ENCODE measurements at regions of chr12 and their contacts with region 1.

Region 1: DNA sequence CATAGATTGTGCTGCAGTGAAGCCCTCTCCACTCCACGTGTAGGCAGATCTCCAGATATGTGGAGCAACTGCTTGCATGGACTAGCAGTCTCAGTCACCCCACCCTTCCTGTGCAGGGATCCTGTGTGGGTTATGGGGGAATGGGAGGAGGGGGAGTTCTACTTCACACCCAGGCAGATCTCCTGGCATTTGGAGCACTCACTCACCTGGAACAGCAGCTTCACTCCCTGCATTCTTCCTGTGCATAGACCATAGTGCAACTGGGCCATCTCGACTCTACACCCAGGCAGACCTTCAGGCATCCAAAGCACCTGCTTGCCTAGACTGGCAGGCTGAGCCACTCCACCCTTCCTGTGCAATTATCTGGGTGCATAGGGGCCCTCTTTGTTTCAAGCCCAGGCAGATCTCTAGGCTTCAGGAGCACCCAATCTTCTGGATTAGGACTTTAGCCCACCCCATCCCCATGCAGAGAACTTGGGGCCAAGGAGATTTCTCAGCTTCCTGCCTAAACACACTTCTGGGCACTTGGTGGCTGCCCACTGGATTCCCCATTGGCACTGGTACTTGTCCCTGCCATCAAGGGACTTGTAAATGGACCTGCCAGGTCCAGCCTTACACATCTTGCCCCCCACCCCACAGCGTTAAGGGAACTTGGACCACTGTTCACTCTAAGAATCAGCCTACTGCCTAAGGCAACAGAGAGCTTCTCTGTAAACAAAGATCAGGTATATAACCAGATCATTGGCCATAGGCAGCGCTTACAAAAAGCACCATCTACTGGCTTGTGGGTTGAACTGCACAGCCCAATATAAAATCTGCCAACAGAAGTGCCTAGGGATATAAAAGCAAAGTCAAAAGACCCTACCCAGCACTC is 95.8 kb upstream of the PCED1B start:
- DNase-seq: no peak
- H3K4me3 ChIP-seq: no peak overlapping the region
- CTCF ChIP-seq: peak; percentile 81

Region 2: DNA sequence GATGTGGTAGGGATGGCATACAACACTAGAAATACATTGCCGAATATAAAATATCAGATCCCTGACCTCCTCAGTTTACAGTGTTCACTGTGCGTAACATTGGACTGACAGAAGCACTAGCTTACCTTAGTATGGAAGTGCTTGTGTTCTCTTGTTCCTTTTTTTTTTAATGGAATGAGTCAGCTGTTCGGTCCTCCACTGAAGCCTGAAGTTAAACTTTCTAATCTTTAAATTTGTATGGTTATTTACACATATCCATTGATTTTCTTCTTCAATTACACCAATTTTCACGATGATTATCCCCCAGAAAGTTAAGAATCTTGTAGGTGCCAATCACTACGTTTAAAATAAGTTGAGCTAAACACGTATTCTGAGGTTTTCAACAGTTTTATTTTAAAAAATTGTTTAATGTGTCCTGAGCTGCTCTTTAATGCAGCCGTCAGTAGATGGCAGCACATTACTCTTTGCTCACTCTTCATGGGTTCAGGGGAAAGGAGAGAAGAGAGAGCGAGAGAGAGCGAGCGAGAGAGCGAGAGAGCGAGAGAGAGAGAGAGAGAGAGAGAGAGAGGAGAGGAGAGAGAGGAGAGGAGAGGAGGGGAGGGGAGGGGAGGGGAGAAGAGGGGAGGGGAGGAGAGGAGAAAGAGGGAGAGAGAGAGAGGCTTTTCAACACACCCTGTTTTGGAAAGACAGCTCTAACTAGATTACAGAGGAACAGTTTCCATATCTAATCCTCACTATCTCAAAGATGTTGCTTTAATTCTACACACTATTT is 858.6 kb before region 1 on chr12:
- CTCF ChIA-PET with region 1: interaction called, 12 read pairs
- POLR2A ChIA-PET with region 1: no interaction called
- DNase-seq: peak; percentile 53
- H3K4me3 ChIP-seq: no peak overlapping the region
- CTCF ChIP-seq: peak; percentile 63

Region 3: GRCh38 chr12:46675736-46676135 is 307.9 kb before region 1 on chr12:
- CTCF ChIA-PET with region 1: interaction called, 28 read pairs
- POLR2A ChIA-PET with region 1: no interaction called
- DNase-seq: no peak
- H3K4me3 ChIP-seq: no peak overlapping the region
- CTCF ChIP-seq: peak; percentile 1

Region 4: GRCh38 chr12:46944088-46944487 is 39.5 kb before region 1 on chr12:
- CTCF ChIA-PET with region 1: interaction called, 13 read pairs
- POLR2A ChIA-PET with region 1: no interaction called
- DNase-seq: no peak
- H3K4me3 ChIP-seq: no peak overlapping the region
- CTCF ChIP-seq: peak; percentile 34

Region 5: DNA sequence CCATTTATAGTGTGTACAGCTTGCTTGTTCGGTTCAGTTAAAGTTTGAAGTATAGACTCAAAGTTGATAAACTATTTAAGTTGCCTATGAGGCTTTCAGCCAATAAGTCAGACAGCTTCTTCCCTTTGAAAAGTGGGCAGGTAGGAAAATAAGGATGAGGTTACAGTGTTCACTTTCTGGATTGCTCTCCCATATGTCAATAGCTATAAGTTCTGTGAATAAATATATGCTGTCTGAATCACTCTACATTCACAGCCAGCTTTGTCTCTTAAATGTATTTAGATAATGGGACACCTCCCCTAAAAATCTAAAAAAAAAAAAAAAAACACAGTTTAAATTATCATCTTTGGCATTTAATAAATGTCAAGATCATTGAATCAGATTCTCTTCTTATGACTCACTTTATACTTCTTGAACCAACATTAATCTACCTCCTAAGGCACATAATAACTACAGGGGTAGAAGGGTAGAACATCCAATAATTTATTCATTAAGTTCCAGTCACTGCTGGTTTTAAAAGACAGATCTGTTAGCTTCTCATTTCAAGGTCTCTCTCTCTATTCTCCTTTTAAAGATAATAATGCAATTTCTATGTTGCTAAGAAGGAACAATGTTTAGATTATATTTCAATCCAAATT is 30.6 kb before region 1 on chr12:
- CTCF ChIA-PET with region 1: interaction called, 13 read pairs
- POLR2A ChIA-PET with region 1: no interaction called
- DNase-seq: no peak
- H3K4me3 ChIP-seq: no peak overlapping the region
- CTCF ChIP-seq: no peak

Region 6: GRCh38 chr12:46963977-46964971 is 19.4 kb before region 1 on chr12:
- CTCF ChIA-PET with region 1: interaction called, 51 read pairs
- POLR2A ChIA-PET with region 1: interaction called, 4 read pairs
- DNase-seq: no peak
- H3K4me3 ChIP-seq: no peak overlapping the region
- CTCF ChIP-seq: no peak

Region 7: DNA sequence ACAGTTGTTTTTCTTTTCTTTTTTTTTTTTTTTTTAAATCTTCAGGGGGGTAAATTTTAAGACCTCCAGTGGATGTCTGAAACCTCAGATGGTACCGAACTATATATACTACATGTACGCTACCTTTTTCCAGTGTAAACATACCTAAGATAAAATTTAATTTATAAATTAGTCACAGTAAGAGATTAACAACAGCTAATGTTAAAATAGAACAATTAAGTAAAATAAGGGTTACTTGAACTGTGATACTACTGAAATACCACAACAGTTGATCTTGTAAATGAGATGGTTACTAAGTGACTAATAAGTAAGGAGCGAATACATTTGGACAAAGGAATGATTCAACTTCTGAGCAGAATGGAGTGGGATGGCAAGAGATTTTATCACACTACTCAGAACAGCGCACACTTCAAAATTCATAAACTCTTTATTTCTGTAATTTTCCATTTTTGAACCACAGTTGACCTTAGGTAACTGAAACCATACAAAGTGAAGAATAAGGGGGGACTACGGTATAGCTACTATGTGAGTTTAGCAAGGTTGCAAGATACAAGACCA is 15.3 kb after region 1 on chr12:
- CTCF ChIA-PET with region 1: interaction called, 12 read pairs
- POLR2A ChIA-PET with region 1: no interaction called
- DNase-seq: no peak
- H3K4me3 ChIP-seq: no peak overlapping the region
- CTCF ChIP-seq: no peak

Region 8: DNA sequence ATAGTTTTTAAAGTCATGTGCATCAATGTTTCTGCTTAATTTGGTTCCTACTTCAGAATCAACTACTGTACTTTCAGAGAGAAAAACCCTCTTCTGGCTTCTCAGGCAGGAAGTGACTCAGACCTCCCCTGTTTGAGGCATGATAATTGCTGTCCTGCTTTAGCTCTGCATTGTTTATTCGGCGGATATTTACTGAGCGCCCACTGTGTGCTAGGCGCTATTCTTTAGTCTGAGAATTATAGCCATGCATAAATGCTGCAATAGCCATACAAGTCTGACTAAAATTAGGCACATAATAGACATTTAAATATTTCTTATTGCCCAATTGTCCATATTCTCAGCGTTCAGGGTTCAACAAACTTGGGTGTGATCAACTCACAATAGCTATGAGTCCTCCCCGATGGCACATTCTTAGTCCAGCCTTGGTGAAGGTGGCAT is 102.2 kb after region 1 on chr12:
- CTCF ChIA-PET with region 1: no interaction called
- POLR2A ChIA-PET with region 1: no interaction called
- DNase-seq: no peak
- H3K4me3 ChIP-seq: no peak overlapping the region
- CTCF ChIP-seq: no peak

Measured in AG04449 (cell line).